Dendritic cell treated with granulocyte-macrophage colony-stimulating factor and Interleukin-4, amounts not matched to agents 40 ng/mL and 50 ng/mL, for 4 days (primary cell): ENCODE measurements at regions of chr4 and their contacts with region 1.

Region 1: DNA sequence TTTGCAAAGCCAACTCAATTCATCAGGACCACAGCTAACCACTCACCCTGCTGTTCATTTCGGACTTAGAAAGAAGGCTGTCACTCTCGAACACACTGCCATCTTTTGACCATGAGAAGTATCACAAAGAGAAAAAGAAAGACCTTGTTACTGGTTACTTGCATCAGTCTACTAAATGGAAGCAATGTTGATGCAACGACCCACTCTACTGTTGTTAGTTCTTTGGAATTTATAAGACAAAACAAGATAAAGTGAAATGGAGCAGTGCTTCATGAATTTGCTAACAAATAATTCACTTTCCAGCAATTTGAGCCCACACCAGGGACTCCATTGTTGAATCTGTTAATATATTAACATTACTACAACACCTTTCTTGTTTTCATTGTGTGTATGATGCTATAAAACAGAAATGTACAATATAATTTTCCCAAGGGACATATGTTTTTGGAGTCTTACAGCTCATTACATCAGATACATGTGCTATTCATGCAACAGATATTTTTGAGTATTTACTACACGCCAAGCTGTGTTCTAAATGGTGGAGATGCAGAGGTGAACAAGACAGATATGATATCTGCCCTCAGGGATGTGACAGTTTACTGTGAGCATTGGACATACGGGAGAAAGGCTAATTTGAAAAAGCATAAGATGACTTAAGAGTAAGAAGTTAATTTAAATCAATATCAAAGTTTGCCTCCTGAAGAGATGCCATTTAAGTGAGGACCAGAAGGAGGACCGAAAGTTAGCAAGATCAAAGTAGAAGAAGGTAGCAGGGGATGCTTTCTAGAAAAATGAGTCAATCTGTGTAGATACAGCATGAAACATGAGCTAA is 87.2 kb downstream of the AREG start:
- H3K4me3 Mint-ChIP-seq: no peak overlapping the region
- H3K27ac Mint-ChIP-seq: no peak overlapping the region
- H3K4me1 Mint-ChIP-seq: peaks cover under 1% of the 10 kb centered on the region
- H3K27me3 Mint-ChIP-seq: no peaks in the 10 kb centered on the region

Region 2: GRCh38 chr4:74189331-74190043 is 342.7 kb before region 1 on chr4:
- intact Hi-C with region 1: loop called (anchors 10 kb)
- H3K4me3 Mint-ChIP-seq: no peak overlapping the region
- H3K27ac Mint-ChIP-seq: no peak overlapping the region
- H3K4me1 Mint-ChIP-seq: no peaks in the 10 kb centered on the region
- H3K27me3 Mint-ChIP-seq: no peaks in the 10 kb centered on the region

Region 3: DNA sequence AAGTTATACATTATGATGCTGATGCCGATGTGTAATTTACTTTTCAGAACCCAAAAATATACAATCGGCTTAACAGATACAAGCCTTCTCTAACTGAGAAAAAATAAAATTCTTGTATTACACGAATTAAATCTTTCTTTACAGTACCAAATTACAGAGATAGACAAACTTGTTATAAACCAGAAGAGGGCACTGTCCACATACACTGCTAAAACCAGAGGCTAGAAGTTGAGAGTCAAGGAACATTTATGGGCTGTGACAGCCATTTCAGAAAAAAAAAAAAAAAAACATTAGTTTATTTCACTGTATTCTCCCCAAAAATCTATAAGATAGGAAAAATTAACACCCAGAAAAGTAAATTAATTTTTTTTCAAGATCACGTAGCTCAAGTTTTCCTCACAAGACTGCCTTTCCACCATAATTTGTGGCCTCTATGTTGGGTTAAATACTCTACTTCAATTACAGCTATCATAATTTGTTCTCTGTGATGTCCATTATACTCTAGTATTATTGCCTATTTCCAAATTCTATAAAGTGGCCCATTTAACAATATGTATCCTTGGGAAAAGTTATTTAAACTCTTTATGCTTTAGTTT is 155.2 kb before region 1 on chr4:
- intact Hi-C with region 1: loop called (anchors 5 kb)
- H3K4me3 Mint-ChIP-seq: no peak overlapping the region
- H3K27ac Mint-ChIP-seq: no peak overlapping the region
- H3K4me1 Mint-ChIP-seq: peaks cover 20% of the 10 kb centered on the region
- H3K27me3 Mint-ChIP-seq: no peaks in the 10 kb centered on the region

Region 4: GRCh38 chr4:74623041-74623440 is 90.9 kb after region 1 on chr4:
- intact Hi-C with region 1: loop called (anchors 10 kb)
- H3K4me3 Mint-ChIP-seq: no peak overlapping the region
- H3K27ac Mint-ChIP-seq: no peak overlapping the region
- H3K4me1 Mint-ChIP-seq: peaks cover 15% of the 10 kb centered on the region
- H3K27me3 Mint-ChIP-seq: peaks cover 2% of the 10 kb centered on the region

Region 5: GRCh38 chr4:74675673-74676279 is 143.6 kb after region 1 on chr4:
- intact Hi-C with region 1: loop called (anchors 5 kb)
- H3K4me3 Mint-ChIP-seq: no peak overlapping the region
- H3K27ac Mint-ChIP-seq: no peak overlapping the region
- H3K4me1 Mint-ChIP-seq: peaks cover 6% of the 10 kb centered on the region
- H3K27me3 Mint-ChIP-seq: no peaks in the 10 kb centered on the region